Prostate gland (tissue), 2 donors: ENCODE measurements at regions of chr2 and their contacts with region 1.

Region 1: DNA sequence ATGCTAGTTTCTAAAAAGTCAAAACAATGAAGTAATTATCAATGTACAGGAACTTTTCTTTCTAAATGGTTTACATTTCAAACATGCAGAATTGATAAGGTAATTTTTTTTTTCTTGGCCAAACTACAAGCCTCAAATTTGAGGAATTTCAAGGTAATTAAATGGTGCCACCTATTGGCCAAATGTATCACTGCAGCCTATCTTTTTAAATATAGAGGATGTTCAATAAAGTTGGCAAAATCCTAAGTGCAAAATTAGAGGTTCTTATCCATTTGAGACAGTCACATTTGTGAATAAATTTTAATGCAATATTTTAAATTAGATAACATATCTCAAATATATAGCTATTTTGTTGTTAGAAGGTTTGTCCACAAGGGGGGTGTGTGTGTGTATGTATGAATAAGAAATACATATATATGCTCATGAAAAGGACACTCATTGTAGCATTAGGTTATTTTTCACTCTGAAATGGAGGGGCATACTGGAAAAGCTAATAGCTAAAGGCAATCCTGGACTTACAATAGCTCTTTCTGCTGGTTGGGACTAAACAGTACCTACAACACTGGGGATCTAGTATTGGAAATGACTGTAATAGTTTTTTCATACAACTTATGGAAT is 26.2 kb downstream of the MMADHC start:
- DNase-seq: peak; percentile 28
- H3K4me3 ChIP-seq: no peak overlapping the region
- H3K27ac ChIP-seq: no peak overlapping the region
- H3K4me1 ChIP-seq: no peaks in the 10 kb centered on the region
- H3K27me3 ChIP-seq: no peaks in the 10 kb centered on the region
- CTCF ChIP-seq: peak; percentile 85 to 91 (median 89)
- POLR2A ChIP-seq: no peak

Region 2: GRCh38 chr2:149017116-149017985 is 544.1 kb before region 1 on chr2:
- intact Hi-C with region 1: loop called (anchors 5 kb)
- DNase-seq: peak; percentile 81
- H3K4me3 ChIP-seq: no peak overlapping the region
- H3K27ac ChIP-seq: no peak overlapping the region
- H3K4me1 ChIP-seq: no peaks in the 10 kb centered on the region
- H3K27me3 ChIP-seq: no peaks in the 10 kb centered on the region
- CTCF ChIP-seq: peak; percentile 74 to 90 (median 86)
- POLR2A ChIP-seq: no peak

Region 3: GRCh38 chr2:149666809-149667320 is 105.4 kb after region 1 on chr2:
- intact Hi-C with region 1: no loop called
- DNase-seq: no peak
- H3K4me3 ChIP-seq: no peak overlapping the region
- H3K27ac ChIP-seq: no peak overlapping the region
- H3K4me1 ChIP-seq: no peaks in the 10 kb centered on the region
- H3K27me3 ChIP-seq: no peaks in the 10 kb centered on the region
- CTCF ChIP-seq: no peak
- POLR2A ChIP-seq: no peak